ENCODE measurements at regions of chr4 and their contacts with region 1.

Region 1: DNA sequence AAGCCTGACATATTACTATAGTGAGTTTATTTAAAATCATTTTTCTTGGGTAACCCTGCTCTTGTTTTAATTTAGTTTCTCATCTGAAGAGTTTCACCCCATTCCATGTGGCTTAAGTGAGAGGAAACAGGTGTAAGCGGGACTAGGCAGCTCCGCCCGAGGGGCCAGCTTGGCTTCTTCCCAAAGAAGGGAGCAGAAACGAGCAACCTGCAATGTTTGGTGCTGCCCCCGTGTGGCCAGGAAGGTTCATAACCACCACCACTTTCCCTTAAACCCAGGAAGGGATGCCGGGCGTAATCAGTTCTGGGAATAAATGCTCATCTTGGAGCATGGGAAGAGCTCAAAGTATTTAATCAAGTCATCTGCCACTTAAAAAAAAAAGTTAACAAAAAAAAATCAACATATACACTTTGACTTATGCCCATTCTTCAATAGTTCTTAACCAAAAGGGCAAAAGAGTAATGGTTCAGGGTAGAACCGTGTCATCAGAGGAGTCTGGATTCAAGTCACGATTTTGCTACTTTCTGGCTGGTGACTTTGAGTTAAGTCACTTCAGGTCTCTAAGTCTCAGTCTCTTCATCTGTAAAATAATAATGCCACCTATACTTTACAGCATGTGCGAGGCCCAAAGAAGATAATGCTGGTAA is 147.9 kb downstream of the NSUN7 start:
- DNase-seq: peak; percentile 75
- ATAC-seq: peak; percentile 88
- H3K4me3 Mint-ChIP-seq: peak overlapping the region; percentile 64
- H3K27ac Mint-ChIP-seq: peak overlapping the region; percentile 75
- H3K4me1 Mint-ChIP-seq: peaks cover 7% of the 10 kb centered on the region
- H3K27me3 Mint-ChIP-seq: no peaks in the 10 kb centered on the region
- CTCF ChIP-seq: peak; percentile 77

Region 2: GRCh38 chr4:40840985-40841571 is 56.6 kb before region 1 on chr4:
- CTCF ChIA-PET with region 1: interaction called, 21 read pairs
- POLR2A ChIA-PET with region 1: no interaction called
- intact Hi-C with region 1: no loop called
- DNase-seq: peak; percentile 95
- ATAC-seq: peak; percentile 90
- H3K4me3 Mint-ChIP-seq: no peak overlapping the region
- H3K27ac Mint-ChIP-seq: no peak overlapping the region
- H3K4me1 Mint-ChIP-seq: peaks cover 5% of the 10 kb centered on the region
- H3K27me3 Mint-ChIP-seq: peaks cover 7% of the 10 kb centered on the region
- CTCF ChIP-seq: peak; percentile 77

Region 3: DNA sequence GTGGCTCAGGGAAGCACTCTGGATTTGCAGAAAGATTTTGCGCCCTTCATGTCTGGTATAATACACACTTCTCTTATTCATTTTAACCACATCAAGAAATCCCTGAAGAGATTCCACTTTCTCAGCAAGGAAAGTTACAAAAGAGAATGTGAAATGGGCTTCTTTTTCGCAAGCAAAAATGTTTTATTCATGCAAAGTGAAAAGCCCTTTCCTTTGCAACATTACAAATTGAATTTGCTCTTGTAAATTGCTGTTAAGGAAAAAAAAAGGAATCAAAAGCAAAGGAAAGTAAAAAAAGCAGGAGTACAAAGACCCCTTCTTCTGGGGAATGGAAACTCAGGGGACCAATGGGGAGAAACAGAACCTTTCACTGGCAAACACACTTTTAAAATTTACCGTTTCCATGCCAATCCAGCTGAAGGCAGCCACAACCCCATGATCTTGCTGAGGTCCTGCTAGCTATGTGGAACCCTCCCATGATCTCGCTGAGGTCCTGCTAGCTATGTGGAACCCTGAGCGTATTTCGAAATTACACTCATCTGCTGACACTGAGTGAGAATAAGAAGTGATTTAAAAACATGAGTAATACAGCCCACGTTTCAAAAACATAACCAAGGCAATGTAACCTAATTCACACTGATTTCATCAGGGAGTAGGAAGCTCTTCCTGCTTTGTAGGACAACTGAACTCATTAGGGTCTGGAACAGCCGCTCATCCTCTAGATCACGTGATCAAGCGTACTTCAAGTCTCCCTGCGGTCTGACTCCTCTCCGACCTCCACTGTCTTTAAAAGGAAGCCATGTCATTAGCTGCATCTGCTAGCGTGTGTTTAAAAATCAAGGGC is 10.2 kb before region 1 on chr4:
- CTCF ChIA-PET with region 1: interaction called, 33 read pairs
- POLR2A ChIA-PET with region 1: no interaction called
- intact Hi-C with region 1: no loop called
- DNase-seq: no peak
- ATAC-seq: no peak
- H3K4me3 Mint-ChIP-seq: no peak overlapping the region
- H3K27ac Mint-ChIP-seq: no peak overlapping the region
- H3K4me1 Mint-ChIP-seq: peaks cover 8% of the 10 kb centered on the region
- H3K27me3 Mint-ChIP-seq: peaks cover 1% of the 10 kb centered on the region
- CTCF ChIP-seq: no peak

Region 4: DNA sequence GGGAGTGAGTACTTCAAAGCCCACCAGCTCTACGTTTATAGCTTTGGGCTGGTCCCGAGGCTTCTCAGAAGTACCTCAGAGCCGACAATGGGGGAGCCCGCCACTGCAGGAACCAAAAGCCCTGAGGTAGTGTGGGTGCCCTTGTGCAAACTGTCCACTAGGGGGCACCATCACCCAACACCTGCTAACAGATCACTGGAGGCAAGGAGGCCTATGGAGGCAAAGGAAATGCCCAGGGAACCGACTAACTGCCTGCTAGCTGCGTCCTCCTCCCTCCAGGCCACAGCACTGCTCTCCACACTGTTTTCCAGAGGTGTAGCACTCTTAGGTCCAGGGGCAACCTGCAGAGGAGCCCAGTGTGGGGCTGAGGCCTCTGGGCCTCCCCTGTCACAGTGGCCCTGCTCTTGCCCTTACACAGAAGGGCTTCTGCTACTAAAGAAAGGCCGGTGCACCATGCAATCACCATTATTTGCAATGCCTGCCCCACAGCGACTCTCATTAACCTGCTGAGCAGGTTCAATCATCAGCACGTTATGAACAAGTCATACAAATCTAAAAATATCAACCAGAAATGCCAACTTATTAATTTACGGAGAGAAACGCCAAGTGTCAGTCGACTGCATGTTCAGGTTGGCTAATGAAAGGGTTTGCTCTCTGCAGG is 11.2 kb after region 1 on chr4:
- CTCF ChIA-PET with region 1: interaction called, 64 read pairs
- POLR2A ChIA-PET with region 1: interaction called, 3 read pairs
- intact Hi-C with region 1: no loop called
- DNase-seq: peak; percentile 82
- ATAC-seq: peak; percentile 77
- H3K4me3 Mint-ChIP-seq: no peak overlapping the region
- H3K27ac Mint-ChIP-seq: peak overlapping the region; percentile 93
- H3K4me1 Mint-ChIP-seq: peaks cover 31% of the 10 kb centered on the region
- H3K27me3 Mint-ChIP-seq: no peaks in the 10 kb centered on the region
- CTCF ChIP-seq: peak; percentile 90

Region 5: DNA sequence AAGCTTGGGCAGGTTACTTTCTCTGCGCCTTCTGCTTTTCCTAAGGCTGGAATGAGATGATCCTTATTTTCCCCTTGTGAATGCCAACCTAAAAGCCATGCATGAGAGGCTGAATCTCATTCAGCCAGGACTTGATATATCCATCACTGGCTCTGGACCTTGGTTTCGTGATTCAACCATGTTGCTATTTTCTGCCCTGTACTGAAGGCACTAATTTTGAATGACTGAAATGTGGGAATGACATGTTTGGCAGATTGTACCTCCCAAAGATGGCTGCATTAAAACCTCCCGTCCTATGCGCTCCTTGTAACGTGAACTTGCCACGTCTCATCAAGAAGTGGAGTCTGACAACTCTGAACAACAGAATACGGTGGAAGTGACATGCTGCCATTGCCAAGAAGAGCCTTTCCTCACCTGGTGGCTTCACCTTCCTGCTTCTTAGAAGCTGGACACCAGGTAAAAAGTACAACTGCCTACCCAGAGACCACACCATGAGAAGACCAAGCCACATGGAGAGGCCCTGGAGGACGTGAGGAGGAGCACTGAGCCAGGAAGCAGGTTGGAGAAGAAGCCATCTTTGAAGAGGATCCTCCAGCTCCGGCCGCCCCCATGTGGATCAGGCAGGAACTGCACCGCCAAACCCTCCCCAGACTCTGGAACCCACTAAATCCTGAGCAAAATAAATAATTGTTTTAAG is 26.6 kb after region 1 on chr4:
- CTCF ChIA-PET with region 1: interaction called, 10 read pairs
- POLR2A ChIA-PET with region 1: no interaction called
- intact Hi-C with region 1: no loop called
- DNase-seq: peak; percentile 90
- ATAC-seq: peak; percentile 93
- H3K4me3 Mint-ChIP-seq: no peak overlapping the region
- H3K27ac Mint-ChIP-seq: peak overlapping the region; percentile 92
- H3K4me1 Mint-ChIP-seq: peaks cover 9% of the 10 kb centered on the region
- H3K27me3 Mint-ChIP-seq: peaks cover 21% of the 10 kb centered on the region
- CTCF ChIP-seq: peak; percentile 91

Region 6: GRCh38 chr4:41236046-41236445 is 338.4 kb after region 1 on chr4:
- CTCF ChIA-PET with region 1: no interaction called
- POLR2A ChIA-PET with region 1: no interaction called
- intact Hi-C with region 1: no loop called
- DNase-seq: no peak
- ATAC-seq: no peak
- H3K4me3 Mint-ChIP-seq: no peak overlapping the region
- H3K27ac Mint-ChIP-seq: no peak overlapping the region
- H3K4me1 Mint-ChIP-seq: no peaks in the 10 kb centered on the region
- H3K27me3 Mint-ChIP-seq: no peaks in the 10 kb centered on the region
- CTCF ChIP-seq: no peak

Measured in activated CD8-positive, alpha-beta T cell treated with anti-CD3 and anti-CD28 coated beads for 36 hours (primary cell).